H1 (cell line): ENCODE measurements at regions of chrX and their contacts with region 1.

Region 1: GRCh38 chrX:135437867-135438733 is 16.4 kb downstream of the SMIM10L2A start:
- DNase-seq: no peak
- H3K4me3 ChIP-seq: no peak overlapping the region
- H3K27ac ChIP-seq: no peak overlapping the region
- H3K4me1 ChIP-seq: no peaks in the 10 kb centered on the region
- H3K27me3 ChIP-seq: no peaks in the 10 kb centered on the region
- CTCF ChIP-seq: peak in 2 of 3 experiments; percentile 29 to 32; a peak in 3 of 4 replicates
- EP300 ChIP-seq: no peak
- POLR2A ChIP-seq: no peak
- RAD21 ChIP-seq: peak; percentile 26 to 38; a peak in 3 of 4 replicates

Region 2: DNA sequence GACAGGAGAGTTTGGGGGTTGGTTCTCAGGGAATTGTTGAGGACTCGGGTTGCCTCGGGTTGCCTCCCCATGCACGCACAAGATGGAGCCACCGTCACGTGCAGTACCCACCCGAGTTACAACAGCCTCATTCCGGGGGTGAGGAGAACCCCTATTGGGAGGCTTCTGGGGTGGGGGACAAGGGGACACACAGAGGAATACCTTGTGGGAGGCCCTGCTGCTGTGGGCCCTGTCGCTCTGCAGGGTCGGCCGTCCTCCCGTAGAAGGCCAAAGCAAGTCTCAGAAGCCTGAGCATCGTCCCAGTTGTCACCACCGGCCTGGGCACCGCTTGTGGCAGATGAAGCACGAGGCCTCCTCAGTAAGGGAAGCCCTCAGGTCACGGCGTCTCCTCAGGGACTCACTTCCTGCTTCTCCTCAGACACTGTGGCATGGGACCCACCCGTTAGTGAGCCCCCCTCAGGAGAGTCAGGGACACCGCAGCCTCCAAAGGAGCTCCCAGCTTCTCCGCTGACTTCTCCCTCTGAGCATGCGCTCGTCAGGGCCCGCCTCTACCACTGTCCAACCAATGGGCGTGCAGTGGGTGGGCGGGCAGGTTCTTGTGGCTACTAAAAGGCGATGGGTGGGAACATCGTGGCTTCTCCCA is 267.1 kb before region 1 on chrX and contains the start of gene CT55:
- CTCF ChIA-PET with region 1: no interaction called
- POLR2A ChIA-PET with region 1: no interaction called
- DNase-seq: no peak
- H3K4me3 ChIP-seq: no peak within 1 kb of the TSS
- H3K27ac ChIP-seq: no peak within 1 kb of the TSS
- H3K4me1 ChIP-seq: no peaks in the 10 kb centered on the region
- H3K27me3 ChIP-seq: no peaks in the 10 kb centered on the region
- CTCF ChIP-seq: no peak
- EP300 ChIP-seq: no peak
- POLR2A ChIP-seq: no peak
- RAD21 ChIP-seq: no peak
- total RNA-seq, gene CT55: not detected in 2 replicates

Region 3: DNA sequence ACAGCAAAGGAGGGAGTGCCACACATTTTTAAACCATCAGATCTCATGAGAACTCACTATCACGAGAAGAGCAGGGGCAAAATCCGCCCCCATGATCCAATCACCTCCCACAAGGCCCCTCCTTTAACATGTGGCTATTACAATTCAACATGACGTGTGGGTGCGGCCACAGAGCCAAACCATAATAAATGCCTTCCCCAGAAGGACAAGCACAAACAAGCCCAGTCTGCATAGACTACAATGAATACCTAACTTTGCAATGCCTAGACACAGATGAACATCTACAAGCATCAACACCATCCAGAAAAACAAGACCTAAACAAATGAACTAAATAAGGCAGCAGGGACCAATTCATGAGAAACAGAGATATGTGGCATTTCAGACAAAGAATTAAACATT is 173.9 kb before region 1 on chrX:
- CTCF ChIA-PET with region 1: no interaction called
- POLR2A ChIA-PET with region 1: no interaction called
- DNase-seq: no peak
- H3K4me3 ChIP-seq: no peak overlapping the region
- H3K27ac ChIP-seq: no peak overlapping the region
- H3K4me1 ChIP-seq: no peaks in the 10 kb centered on the region
- H3K27me3 ChIP-seq: no peaks in the 10 kb centered on the region
- CTCF ChIP-seq: no peak
- EP300 ChIP-seq: no peak
- POLR2A ChIP-seq: no peak
- RAD21 ChIP-seq: no peak

Region 4: DNA sequence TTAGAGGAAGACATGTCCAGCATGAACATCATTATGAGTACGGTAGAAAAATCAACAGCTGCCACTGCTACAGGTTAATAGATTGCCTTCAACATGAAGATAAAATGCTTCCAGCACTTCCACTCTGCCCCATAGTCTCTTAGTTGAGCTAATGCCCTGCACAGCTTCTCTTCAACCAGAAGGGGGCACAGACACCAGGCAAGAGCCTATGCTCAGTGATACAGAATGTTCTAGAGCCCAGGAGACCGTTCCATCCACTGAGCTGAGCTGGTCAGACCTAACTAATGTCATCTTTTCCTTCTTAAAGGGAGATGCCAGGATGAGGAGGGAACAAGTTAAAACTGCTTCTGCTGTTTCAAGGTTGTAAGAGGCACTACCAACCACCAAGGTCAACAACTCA is 25.8 kb after region 1 on chrX:
- CTCF ChIA-PET with region 1: interaction called, 11 read pairs
- POLR2A ChIA-PET with region 1: no interaction called
- DNase-seq: no peak
- H3K4me3 ChIP-seq: no peak overlapping the region
- H3K27ac ChIP-seq: no peak overlapping the region
- H3K4me1 ChIP-seq: peaks cover 0 to 3% (median 0%) of the 10 kb centered on the region in 4 experiments; a peak in 2 of 7 replicates
- H3K27me3 ChIP-seq: no peaks in the 10 kb centered on the region
- CTCF ChIP-seq: peak in 2 of 3 experiments; percentile 17 to 46; a peak in 2 of 4 replicates
- EP300 ChIP-seq: no peak
- POLR2A ChIP-seq: no peak
- RAD21 ChIP-seq: peak in 1 of 2 experiments; percentile 36; a peak in 1 of 4 replicates